Transverse colon (tissue), 4 donors: ENCODE measurements at regions of chr6 and their contacts with region 1.

Region 1: GRCh38 chr6:114049367-114049997 is 78.5 kb upstream of the HDAC2 start:
- DNase-seq: no peak
- H3K4me3 ChIP-seq: no peak overlapping the region
- H3K27ac ChIP-seq: no peak overlapping the region
- H3K4me1 ChIP-seq: no peaks in the 10 kb centered on the region
- H3K27me3 ChIP-seq: no peaks in the 10 kb centered on the region
- CTCF ChIP-seq: no peak
- EP300 ChIP-seq: no peak
- POLR2A ChIP-seq: no peak

Region 2: DNA sequence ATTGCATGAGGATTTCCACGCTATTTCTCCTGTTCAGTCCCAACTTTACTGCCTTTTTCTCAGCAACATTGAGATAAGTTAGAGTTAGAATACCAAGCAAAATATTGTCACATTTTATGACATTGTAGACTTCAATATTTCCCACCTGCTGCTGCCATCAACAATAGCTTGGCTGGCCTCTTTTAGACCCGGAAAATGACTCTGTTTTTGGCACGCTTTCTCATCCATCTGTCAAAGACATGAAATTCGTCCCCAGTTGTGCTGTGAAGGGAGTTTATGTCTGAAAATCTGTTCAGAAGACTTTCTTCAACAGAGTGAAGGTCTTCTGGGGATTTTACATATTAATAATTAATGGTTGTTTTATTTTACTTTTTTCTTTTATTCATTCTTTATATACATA is 1153.9 kb after region 1 on chr6:
- in situ Hi-C with region 1: no loop called
- intact Hi-C with region 1: loop called (anchors 10 kb)
- DNase-seq: no peak
- H3K4me3 ChIP-seq: no peak overlapping the region
- H3K27ac ChIP-seq: no peak overlapping the region
- H3K4me1 ChIP-seq: no peaks in the 10 kb centered on the region
- H3K27me3 ChIP-seq: no peaks in the 10 kb centered on the region
- CTCF ChIP-seq: no peak
- EP300 ChIP-seq: no peak
- POLR2A ChIP-seq: no peak